ENCODE measurements at regions of chr12 and their contacts with region 1.

Region 1: GRCh38 chr12:9707864-9708808 is 24.8 kb downstream of the CLECL1 start:
- DNase-seq: no peak
- ATAC-seq: peak; percentile 80; the same call in 1 of the 2 replicates
- H3K4me3 ChIP-seq: no peak overlapping the region
- H3K27ac ChIP-seq: no peak overlapping the region
- H3K4me1 ChIP-seq: no peaks in the 10 kb centered on the region
- H3K27me3 ChIP-seq: no peaks in the 10 kb centered on the region
- CTCF ChIP-seq: peak; percentile 78

Region 2: GRCh38 chr12:9634177-9634803 is 73.8 kb before region 1 on chr12:
- CTCF ChIA-PET with region 1: interaction called, 4 read pairs
- POLR2A ChIA-PET with region 1: no interaction called
- in situ Hi-C with region 1: no loop called
- intact Hi-C with region 1: loop called (anchors 1 kb)
- DNase-seq: no peak
- ATAC-seq: no peak
- H3K4me3 ChIP-seq: no peak overlapping the region
- H3K27ac ChIP-seq: no peak overlapping the region
- H3K4me1 ChIP-seq: no peaks in the 10 kb centered on the region
- H3K27me3 ChIP-seq: no peaks in the 10 kb centered on the region
- CTCF ChIP-seq: peak; percentile 60; the same call in 1 of the 2 replicates